ENCODE measurements at regions of chr1 and their contacts with region 1.

Region 1: DNA sequence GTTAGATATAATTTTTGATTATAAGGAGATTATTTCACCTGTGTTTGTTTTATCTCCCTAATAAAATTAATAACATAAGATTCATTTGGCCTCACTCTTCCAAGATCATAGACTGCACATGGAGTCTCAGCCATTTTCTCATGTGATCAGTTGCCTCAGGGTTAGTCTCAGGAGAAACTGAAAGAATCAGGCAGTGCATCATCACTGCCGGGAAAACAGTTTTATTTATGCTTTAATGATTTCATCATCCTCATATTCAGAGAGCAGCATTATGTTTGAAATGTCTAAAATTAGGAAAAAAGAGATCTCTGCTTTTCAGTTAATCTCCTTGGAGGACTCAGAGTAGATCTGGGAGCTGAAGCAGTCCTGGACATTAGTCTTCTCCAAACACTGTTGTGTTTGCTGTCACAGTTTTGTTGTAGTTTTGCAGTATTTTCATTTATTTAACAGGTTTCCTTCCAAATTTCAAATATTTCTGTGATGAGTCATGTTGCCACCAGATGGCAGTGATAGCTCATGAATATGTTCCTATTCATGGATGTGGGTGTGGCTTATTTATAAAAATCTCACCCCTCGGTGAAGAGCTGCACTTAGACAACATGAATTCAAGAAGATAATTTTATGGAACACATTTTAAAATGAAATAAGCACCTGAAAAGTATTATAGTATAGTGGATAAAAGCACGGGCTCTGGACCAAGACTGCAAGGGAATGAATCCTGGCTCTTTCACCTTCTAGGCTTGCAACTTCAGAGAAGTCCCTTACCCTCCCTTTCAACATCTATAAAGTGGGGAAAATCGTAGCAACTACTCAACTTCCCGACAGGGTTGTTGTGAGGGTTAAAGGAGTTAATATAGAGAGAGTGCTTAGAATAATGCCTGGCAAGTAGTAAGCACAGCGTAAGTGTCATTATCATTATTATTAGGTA is 31.2 kb downstream of the CHD1L start:
- DNase-seq: peak; percentile 54
- H3K4me3 ChIP-seq: no peak overlapping the region; a peak in 1 of 4 replicates
- H3K27ac ChIP-seq: peak overlapping the region; percentile 53 to 67; a peak in 3 of 4 replicates
- H3K4me1 ChIP-seq: peaks cover 6 to 9% of the 10 kb centered on the region in 2 experiments; a peak in 2 of 4 replicates
- H3K27me3 ChIP-seq: no peaks in the 10 kb centered on the region
- CTCF ChIP-seq: peak; percentile 70
- EP300 ChIP-seq: no peak
- RAD21 ChIP-seq: peak; percentile 74

Region 2: GRCh38 chr1:147252540-147252939 is 21.1 kb before region 1 on chr1:
- CTCF ChIA-PET with region 1: interaction called, 19 read pairs
- POLR2A ChIA-PET with region 1: no interaction called
- DNase-seq: no peak
- H3K4me3 ChIP-seq: no peak overlapping the region
- H3K27ac ChIP-seq: peak overlapping the region in 1 of 2 experiments; percentile 11; a peak in 1 of 4 replicates
- H3K4me1 ChIP-seq: peaks cover 0 to 9% of the 10 kb centered on the region in 2 experiments; a peak in 2 of 4 replicates
- H3K27me3 ChIP-seq: no peaks in the 10 kb centered on the region
- CTCF ChIP-seq: no peak
- EP300 ChIP-seq: no peak
- RAD21 ChIP-seq: no peak

Region 3: DNA sequence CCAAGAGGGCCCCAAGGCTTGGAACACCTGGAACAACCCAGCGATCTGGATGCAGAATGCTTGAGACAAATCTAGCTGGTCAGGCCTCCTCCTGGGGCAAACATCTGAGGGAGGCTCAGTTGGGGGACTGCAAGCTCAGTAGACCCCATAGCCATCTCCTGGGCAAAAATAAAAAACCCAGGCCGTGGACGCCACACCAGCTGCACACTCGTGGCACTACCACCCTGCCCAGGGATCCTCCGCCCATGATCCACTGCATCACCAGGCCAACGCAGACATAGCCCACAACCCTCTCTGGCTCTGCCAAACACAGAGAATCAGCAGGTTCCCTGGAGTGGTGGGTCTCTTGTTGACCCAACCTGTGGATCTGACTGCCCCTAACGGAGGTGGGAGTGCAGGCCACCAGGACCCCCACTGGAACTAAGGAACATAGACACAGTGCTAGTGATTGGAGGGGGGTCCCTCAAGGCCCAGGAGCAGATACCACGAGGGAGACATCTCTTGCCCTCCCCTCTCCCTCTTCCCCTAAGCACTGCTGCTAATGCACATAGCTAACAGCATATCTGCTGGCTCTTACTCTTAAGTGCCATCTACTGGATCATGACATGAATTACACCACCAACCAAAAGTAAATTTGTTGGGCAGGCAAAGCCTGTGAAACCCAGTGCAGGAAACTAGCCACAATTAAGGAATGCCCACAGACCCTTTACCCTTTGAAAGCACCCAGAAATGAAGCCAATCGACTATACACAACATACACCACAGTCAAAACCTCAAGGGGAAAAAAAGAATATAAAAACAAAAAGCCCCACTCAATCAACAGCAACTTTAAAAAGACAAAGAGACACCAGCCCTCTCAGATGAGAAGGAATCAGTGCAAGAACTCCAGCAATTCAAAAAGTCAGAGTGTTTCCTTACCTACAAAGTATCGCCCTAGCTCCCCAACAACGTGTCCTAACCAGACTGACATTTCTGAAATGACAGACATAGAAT is 116.2 kb after region 1 on chr1:
- CTCF ChIA-PET with region 1: interaction called, 51 read pairs
- POLR2A ChIA-PET with region 1: no interaction called
- DNase-seq: peak; percentile 60
- H3K4me3 ChIP-seq: no peak overlapping the region
- H3K27ac ChIP-seq: no peak overlapping the region
- H3K4me1 ChIP-seq: no peaks in the 10 kb centered on the region
- H3K27me3 ChIP-seq: no peaks in the 10 kb centered on the region
- CTCF ChIP-seq: peak; percentile 72
- EP300 ChIP-seq: no peak
- RAD21 ChIP-seq: peak; percentile 65

Measured in SK-N-SH (cell line).